ENCODE measurements at regions of chr20 and their contacts with region 1.

Region 1: DNA sequence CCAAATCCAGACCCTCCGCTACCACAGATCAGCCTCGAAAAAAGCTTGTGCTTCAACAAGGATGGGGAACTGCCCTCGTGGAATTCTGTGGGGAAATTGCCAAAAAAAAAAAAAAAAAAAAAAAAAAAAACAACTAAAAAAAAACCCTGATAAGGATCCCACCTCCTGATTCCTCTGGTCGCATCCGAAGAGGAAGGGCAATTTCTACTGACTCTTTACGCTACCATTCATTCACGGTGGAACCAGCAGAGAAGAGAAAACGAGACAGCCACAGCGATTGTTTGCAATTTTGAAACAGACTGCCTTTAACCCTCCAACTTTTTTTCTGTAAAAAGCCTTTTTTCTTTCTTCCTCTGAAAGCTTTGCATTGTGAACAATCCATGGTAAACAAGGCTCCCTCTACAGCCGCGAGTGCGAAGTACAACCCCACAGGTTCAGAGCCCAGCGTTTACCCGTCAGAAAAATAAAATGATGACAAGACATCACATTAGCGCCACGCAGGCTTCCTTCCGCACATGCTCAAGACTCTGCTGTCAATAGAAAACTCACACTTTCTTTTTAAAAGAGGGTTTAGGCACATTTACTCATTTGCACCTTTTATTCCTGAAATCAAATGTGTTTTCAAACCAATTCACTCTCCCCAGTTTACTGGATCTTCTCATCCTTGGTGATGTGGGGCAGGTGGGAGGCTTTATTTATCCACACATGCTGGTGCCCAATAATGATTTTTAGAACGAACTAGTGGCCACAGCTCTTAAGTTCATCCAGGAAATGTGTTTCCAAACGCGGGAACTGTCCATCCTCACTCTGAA is 100.0 kb downstream of the NOL4L start:
- DNase-seq: peak; percentile 71 to 93 (median 84)
- ATAC-seq: peak; percentile 81
- H3K4me3 ChIP-seq: peak overlapping the region; percentile 75
- H3K4me3 Mint-ChIP-seq: peak overlapping the region; percentile 97
- H3K27ac ChIP-seq: peak overlapping the region; percentile 44 to 61
- H3K27ac Mint-ChIP-seq: peak overlapping the region; percentile 88
- H3K4me1 ChIP-seq: peaks cover 54% of the 10 kb centered on the region
- H3K4me1 Mint-ChIP-seq: peaks cover 54% of the 10 kb centered on the region
- H3K27me3 ChIP-seq: no peaks in the 10 kb centered on the region
- H3K27me3 Mint-ChIP-seq: no peaks in the 10 kb centered on the region
- CTCF ChIP-seq: peak; percentile 78

Region 2: DNA sequence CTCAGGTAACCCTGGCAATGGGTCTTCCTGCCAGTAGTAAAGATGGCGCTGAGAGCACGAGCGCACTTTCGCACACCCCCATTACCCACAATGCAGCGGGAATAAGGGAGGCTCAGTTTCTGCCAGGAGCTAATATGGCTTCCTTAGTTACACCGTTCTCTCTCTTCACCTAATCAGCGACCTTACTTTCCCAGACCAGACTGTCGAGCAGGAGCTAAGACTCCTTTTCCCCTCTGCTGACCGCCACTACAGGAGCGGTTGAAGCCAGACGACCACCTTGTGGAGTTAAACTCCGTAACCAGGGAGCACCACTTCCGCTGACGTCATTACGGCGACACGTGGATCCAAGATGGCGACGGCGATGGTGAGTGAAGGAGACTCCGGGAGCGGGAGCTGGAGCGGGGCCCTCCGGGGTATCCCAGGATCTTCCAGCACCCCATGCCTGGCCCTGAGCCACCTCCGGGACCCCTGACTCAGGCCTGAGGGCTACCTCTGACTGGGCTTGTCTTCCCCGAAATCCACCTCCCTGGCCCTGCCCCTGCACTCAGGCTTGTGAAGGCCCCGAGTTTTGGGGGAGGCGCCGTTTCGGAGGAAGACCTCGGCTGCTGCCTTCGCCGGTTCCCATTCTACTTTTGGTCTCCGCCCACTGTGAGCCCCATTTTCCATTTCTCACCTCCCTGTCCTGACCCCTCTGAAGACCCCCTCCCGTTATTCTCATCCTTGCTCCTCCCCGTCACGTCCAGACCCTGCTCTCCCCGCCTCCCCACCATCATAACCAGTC is 375.6 kb before region 1 on chr20 and contains the start of gene TM9SF4:
- CTCF ChIA-PET with region 1: no interaction called
- POLR2A ChIA-PET with region 1: no interaction called
- intact Hi-C with region 1: loop called in 1 of 2 experiments (anchors 5 kb)
- DNase-seq: peak; percentile 77 to 96 (median 88)
- ATAC-seq: peak; percentile 89
- H3K4me3 ChIP-seq: peak within 1 kb of the TSS; percentile 97
- H3K4me3 Mint-ChIP-seq: peak within 1 kb of the TSS; percentile 92
- H3K27ac ChIP-seq: peak within 1 kb of the TSS; percentile 100
- H3K27ac Mint-ChIP-seq: peak within 1 kb of the TSS; percentile 93
- H3K4me1 ChIP-seq: peaks cover 27% of the 10 kb centered on the region
- H3K4me1 Mint-ChIP-seq: peaks cover 40% of the 10 kb centered on the region
- H3K27me3 ChIP-seq: no peaks in the 10 kb centered on the region
- H3K27me3 Mint-ChIP-seq: no peaks in the 10 kb centered on the region
- CTCF ChIP-seq: no peak
- total RNA-seq, gene TM9SF4: 22.4 to 24.5 TPM

Region 3: GRCh38 chr20:32336918-32337347 is 148.2 kb before region 1 on chr20:
- CTCF ChIA-PET with region 1: interaction called, 3 read pairs
- POLR2A ChIA-PET with region 1: no interaction called
- intact Hi-C with region 1: loop called in 1 of 2 experiments (anchors 1 kb)
- DNase-seq: peak in 3 of 14 experiments; percentile 35 to 53 (median 53)
- ATAC-seq: peak; percentile 73
- H3K4me3 ChIP-seq: no peak overlapping the region
- H3K4me3 Mint-ChIP-seq: no peak overlapping the region
- H3K27ac ChIP-seq: no peak overlapping the region
- H3K27ac Mint-ChIP-seq: peak overlapping the region; percentile 1
- H3K4me1 ChIP-seq: peaks cover 26% of the 10 kb centered on the region
- H3K4me1 Mint-ChIP-seq: peaks cover 22% of the 10 kb centered on the region
- H3K27me3 ChIP-seq: no peaks in the 10 kb centered on the region
- H3K27me3 Mint-ChIP-seq: no peaks in the 10 kb centered on the region
- CTCF ChIP-seq: peak; percentile 64

Region 4: DNA sequence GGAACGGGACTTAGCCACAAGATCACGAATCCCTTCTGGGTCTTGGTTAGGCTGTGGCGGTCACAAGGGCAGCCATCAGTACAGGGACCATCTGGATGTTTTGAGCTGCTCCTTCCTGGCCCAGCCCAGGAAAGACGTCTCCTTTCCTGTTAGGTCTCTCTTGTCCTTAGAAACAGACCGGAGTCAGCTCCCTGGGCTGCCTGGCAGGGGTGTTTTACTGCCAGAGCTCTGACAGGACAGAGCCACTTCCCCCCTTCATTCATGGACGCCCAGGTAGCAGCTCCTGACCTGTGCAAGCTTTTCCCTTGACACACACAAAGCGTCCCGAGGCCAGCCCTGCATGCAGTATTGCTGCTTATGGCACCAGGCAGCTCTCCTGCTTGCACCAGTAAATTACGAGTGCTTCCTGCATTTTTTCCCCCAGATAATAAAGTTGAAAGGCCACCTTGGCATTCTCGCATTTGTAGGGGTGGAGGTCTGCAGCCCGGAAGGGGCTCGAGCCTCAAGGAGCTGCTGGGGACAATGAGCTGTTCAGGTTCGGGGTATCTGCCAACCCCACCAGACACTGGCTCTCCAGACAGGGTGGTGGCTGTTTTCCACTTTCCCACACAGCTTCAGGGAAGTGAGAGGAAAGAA is 12.5 kb after region 1 on chr20:
- CTCF ChIA-PET with region 1: interaction called, 13 read pairs
- POLR2A ChIA-PET with region 1: interaction called, 3 read pairs
- intact Hi-C with region 1: no loop called
- DNase-seq: peak in 1 of 14 experiments; percentile 29
- ATAC-seq: no peak
- H3K4me3 ChIP-seq: no peak overlapping the region
- H3K4me3 Mint-ChIP-seq: no peak overlapping the region
- H3K27ac ChIP-seq: no peak overlapping the region
- H3K27ac Mint-ChIP-seq: peak overlapping the region; percentile 62
- H3K4me1 ChIP-seq: peaks cover 24% of the 10 kb centered on the region
- H3K4me1 Mint-ChIP-seq: peaks cover 61% of the 10 kb centered on the region
- H3K27me3 ChIP-seq: no peaks in the 10 kb centered on the region
- H3K27me3 Mint-ChIP-seq: no peaks in the 10 kb centered on the region
- CTCF ChIP-seq: no peak

Region 5: DNA sequence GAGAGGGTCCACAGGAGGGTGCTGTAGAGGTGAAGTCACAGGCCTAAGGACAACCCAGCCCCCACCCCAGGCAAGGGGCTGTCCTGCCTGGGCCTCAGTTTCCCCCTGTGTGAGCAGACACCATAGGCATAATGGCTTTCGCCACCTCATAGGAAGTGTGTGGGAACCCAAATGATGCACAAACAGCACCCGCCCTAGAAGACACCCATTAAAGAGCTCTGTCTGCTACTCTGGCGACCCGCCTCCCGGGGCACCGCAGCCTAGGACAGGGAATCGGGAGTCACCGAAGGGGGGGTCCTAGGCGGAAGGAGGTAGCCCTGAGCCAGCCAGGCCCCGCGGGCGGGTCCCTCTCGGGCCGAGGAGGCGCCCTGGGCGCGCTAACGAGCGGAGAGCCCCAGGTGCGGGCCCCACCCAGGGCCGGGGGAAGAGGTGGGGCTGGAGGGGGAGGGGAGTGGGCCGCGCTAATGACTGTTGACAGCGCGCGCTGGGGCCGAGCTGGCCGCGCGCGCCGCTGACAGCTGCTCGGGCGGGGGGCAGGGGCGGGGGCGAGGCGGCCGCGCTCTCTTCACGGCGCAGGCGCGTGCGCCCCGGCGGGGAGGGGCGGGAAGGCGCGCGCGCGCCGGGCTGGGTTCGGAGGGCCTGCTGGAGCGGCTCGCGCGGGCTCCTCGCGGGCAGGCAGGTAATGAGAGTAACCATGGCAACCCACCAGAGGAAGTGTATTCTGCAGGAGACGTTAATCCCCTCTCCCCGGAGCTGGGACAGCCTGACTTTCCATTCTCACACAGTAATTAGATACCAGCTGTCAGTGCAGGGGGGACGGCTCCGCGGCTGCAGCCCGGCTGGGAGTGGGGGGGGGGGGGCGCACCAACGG is 51.0 kb after region 1 on chr20:
- CTCF ChIA-PET with region 1: interaction called, 7 read pairs
- POLR2A ChIA-PET with region 1: interaction called, 8 read pairs
- intact Hi-C with region 1: loop called (anchors 2 kb)
- DNase-seq: peak; percentile 65 to 95 (median 80)
- ATAC-seq: peak; percentile 39
- H3K4me3 ChIP-seq: peak overlapping the region; percentile 54
- H3K4me3 Mint-ChIP-seq: peak overlapping the region; percentile 87
- H3K27ac ChIP-seq: peak overlapping the region; percentile 84 to 91
- H3K27ac Mint-ChIP-seq: peak overlapping the region; percentile 99
- H3K4me1 ChIP-seq: peaks cover 92% of the 10 kb centered on the region
- H3K4me1 Mint-ChIP-seq: peaks cover 88% of the 10 kb centered on the region
- H3K27me3 ChIP-seq: no peaks in the 10 kb centered on the region
- H3K27me3 Mint-ChIP-seq: no peaks in the 10 kb centered on the region
- CTCF ChIP-seq: no peak

Region 6: GRCh38 chr20:32727683-32728082 is 242.5 kb after region 1 on chr20:
- CTCF ChIA-PET with region 1: no interaction called
- POLR2A ChIA-PET with region 1: no interaction called
- intact Hi-C with region 1: no loop called
- DNase-seq: no peak
- ATAC-seq: no peak
- H3K4me3 ChIP-seq: no peak overlapping the region
- H3K4me3 Mint-ChIP-seq: no peak overlapping the region
- H3K27ac ChIP-seq: no peak overlapping the region
- H3K27ac Mint-ChIP-seq: no peak overlapping the region
- H3K4me1 ChIP-seq: peaks cover 17% of the 10 kb centered on the region
- H3K4me1 Mint-ChIP-seq: peaks cover 21% of the 10 kb centered on the region
- H3K27me3 ChIP-seq: no peaks in the 10 kb centered on the region
- H3K27me3 Mint-ChIP-seq: no peaks in the 10 kb centered on the region
- CTCF ChIP-seq: no peak

Region 7: DNA sequence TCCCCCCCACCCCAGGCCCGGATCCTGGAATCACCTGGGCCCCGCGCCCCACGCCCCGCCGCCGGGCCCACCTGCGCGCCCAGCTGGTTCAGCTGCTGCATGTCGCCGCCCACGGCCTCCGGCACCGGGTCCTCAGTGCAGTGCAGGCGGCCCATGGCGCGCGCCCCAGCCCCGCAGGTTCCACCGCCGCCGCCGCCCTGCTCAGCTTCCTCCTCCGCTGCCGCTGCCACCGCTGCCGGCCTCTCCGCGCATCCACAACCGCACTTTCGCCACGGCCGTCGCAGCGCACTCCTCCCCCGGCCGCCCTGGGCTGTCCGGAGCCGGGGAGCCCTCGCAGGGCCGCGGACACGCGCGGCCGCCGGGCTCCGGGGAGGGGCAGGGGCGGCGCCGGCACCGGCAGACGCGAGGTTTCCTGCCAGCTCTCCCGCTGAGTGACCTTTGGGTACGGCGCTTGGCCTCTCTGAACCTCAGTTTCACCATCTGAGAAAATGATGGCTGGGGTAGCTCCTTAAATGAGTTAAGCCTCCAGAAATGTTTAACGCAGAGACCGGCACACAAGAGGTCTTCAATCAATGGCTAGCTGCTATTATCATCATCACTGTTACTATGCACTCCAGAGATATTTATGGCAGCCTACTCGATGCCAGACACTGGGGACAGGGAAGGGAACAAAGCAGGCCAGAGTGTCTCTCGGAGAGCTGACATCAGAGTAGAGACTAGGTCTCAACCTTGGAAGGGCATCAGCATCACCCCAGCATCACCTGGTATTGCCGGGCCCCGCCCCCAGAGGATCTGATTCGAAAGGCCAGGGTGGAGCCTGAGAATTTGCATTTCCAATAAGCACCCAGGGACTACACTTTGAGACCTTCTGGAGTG is 258.3 kb after region 1 on chr20 and contains the start of gene COMMD7:
- CTCF ChIA-PET with region 1: no interaction called
- POLR2A ChIA-PET with region 1: no interaction called
- intact Hi-C with region 1: no loop called
- DNase-seq: peak; percentile 45 to 83 (median 58)
- ATAC-seq: peak; percentile 75
- H3K4me3 ChIP-seq: peak within 1 kb of the TSS; percentile 88
- H3K4me3 Mint-ChIP-seq: peak within 1 kb of the TSS; percentile 94
- H3K27ac ChIP-seq: peak within 1 kb of the TSS; percentile 85 to 91
- H3K27ac Mint-ChIP-seq: peak within 1 kb of the TSS; percentile 96
- H3K4me1 ChIP-seq: peaks cover 38% of the 10 kb centered on the region
- H3K4me1 Mint-ChIP-seq: peaks cover 41% of the 10 kb centered on the region
- H3K27me3 ChIP-seq: no peaks in the 10 kb centered on the region
- H3K27me3 Mint-ChIP-seq: no peaks in the 10 kb centered on the region
- CTCF ChIP-seq: no peak
- total RNA-seq, gene COMMD7: 30.3 to 30.4 TPM